CD8-positive, alpha-beta T cell (primary cell): ENCODE measurements at regions of chr9 and their contacts with region 1.

Region 1: DNA sequence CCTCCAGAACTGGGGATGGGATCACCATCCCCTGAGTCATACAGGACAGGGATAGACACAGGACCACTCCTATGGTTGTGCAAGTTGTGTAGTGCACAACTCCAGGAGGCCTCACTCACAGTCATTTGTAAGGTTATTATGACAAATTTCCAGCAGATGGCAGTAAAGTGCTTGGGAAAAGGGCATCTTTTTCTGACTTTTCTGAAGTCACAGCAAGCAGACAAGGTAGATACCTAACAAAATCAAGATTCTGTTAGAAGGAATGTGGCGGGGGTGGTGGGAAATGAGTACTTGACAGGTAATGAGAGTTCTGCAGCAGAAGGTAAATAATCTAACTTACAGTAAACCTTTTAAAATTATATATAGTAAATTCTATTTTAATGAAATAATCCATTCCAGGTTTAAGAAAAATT is 16.7 kb upstream of the KIF27 start:
- DNase-seq: peak in 6 of 9 experiments; percentile 4 to 78 (median 40)
- ATAC-seq: peak; percentile 77
- H3K4me3 ChIP-seq: no peak overlapping the region
- H3K4me3 Mint-ChIP-seq: no peak overlapping the region
- H3K27ac ChIP-seq: no peak overlapping the region
- H3K27ac Mint-ChIP-seq: no peak overlapping the region
- H3K4me1 ChIP-seq: no peaks in the 10 kb centered on the region
- H3K4me1 Mint-ChIP-seq: peaks cover 2% of the 10 kb centered on the region
- H3K27me3 ChIP-seq: no peaks in the 10 kb centered on the region
- H3K27me3 Mint-ChIP-seq: no peaks in the 10 kb centered on the region
- CTCF ChIP-seq: peak; percentile 80

Region 2: DNA sequence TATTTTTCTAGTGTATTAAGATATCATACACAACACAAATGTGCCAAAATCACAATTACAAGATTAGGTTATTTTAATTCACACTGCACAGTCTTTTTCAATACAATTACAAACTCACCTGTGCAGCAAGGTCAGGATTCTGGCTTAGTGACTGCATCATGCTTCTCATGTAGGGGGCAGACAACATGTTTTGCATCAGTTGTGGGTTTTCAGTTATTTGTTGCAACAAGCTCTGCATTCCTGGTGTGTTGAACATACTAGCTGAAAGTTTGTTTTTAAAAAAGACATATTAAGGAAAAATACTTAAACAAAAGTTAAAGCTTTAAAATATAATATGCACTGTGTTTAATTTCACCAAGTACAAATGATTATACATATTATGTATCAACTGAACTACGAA is 268.9 kb before region 1 on chr9:
- CTCF ChIA-PET with region 1: no interaction called
- POLR2A ChIA-PET with region 1: no interaction called
- intact Hi-C with region 1: no loop called
- DNase-seq: no peak
- ATAC-seq: no peak
- H3K4me3 ChIP-seq: no peak overlapping the region
- H3K4me3 Mint-ChIP-seq: no peak overlapping the region
- H3K27ac ChIP-seq: no peak overlapping the region
- H3K27ac Mint-ChIP-seq: no peak overlapping the region
- H3K4me1 ChIP-seq: peaks cover 3% of the 10 kb centered on the region
- H3K4me1 Mint-ChIP-seq: peaks cover 34% of the 10 kb centered on the region
- H3K27me3 ChIP-seq: no peaks in the 10 kb centered on the region
- H3K27me3 Mint-ChIP-seq: no peaks in the 10 kb centered on the region
- CTCF ChIP-seq: no peak

Region 3: DNA sequence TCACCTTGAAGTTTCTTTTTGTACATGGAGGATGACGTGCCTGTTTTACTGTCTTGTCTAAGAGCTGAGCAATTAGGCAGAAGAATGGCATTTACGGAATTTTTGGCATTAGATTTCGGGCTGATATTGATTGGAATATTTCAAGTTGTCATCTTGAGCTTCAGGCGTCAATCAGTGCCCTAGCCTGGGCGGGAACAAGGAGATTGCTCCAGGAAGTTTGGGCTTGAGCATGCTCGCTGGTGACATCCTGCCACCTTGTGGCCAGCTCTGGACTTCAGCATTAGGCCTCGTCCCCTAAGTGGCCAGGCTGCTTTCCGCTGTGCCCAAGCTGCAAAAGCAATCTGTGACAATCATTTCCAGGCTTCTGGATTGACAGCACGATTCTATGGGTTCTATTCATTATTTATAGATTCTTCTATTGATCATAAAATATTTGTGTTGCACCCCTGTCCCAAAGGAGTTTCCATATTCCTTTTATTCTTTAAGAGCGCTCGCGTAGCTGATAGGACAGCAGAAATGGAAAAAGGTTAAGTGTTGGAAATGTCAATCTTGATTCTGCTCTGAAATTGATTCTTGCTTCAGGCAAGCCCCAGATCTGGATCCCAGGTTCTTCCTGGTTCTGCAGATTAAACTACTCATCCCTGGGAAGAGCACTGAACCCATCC is 323.3 kb after region 1 on chr9:
- CTCF ChIA-PET with region 1: interaction called, 19 read pairs
- POLR2A ChIA-PET with region 1: no interaction called
- intact Hi-C with region 1: loop called in 1 of 2 experiments (anchors 1 kb)
- DNase-seq: peak in 8 of 9 experiments; percentile 17 to 63 (median 48)
- ATAC-seq: no peak
- H3K4me3 ChIP-seq: no peak overlapping the region
- H3K4me3 Mint-ChIP-seq: peak overlapping the region; percentile 43
- H3K27ac ChIP-seq: no peak overlapping the region
- H3K27ac Mint-ChIP-seq: no peak overlapping the region
- H3K4me1 ChIP-seq: no peaks in the 10 kb centered on the region
- H3K4me1 Mint-ChIP-seq: peaks cover 6% of the 10 kb centered on the region
- H3K27me3 ChIP-seq: no peaks in the 10 kb centered on the region
- H3K27me3 Mint-ChIP-seq: peaks cover 3% of the 10 kb centered on the region
- CTCF ChIP-seq: peak; percentile 57

Region 4: DNA sequence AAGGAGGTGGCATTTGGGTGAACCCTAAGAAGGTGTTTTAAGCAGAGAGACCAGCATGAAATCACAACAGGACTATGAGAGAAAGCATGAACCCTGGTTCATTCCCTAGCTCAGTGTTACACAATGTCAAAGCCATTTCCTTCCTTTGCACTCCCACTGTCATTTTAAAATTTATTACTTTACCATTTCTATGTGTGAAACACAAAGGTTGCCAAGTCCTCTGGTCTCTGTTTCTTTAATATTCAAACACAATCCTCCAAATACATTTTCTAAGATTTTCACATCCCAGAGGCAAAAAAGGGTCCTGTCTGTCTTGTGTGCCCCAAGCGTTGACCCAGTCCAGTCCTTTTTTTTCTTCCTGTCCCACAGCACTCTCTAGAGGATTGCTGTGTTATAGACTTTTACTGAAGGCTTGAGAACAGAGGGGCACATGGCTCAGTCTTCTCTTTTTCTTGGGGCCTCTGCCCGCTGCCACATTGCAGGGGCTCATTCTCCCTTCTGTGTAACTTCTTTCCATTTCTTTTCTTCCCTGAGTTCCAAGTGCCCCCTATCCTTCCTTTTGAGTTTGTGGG is 481.2 kb after region 1 on chr9:
- CTCF ChIA-PET with region 1: no interaction called
- POLR2A ChIA-PET with region 1: no interaction called
- intact Hi-C with region 1: no loop called
- DNase-seq: no peak
- ATAC-seq: no peak
- H3K4me3 ChIP-seq: no peak overlapping the region
- H3K4me3 Mint-ChIP-seq: no peak overlapping the region
- H3K27ac ChIP-seq: no peak overlapping the region
- H3K27ac Mint-ChIP-seq: no peak overlapping the region
- H3K4me1 ChIP-seq: no peaks in the 10 kb centered on the region
- H3K4me1 Mint-ChIP-seq: no peaks in the 10 kb centered on the region
- H3K27me3 ChIP-seq: no peaks in the 10 kb centered on the region
- H3K27me3 Mint-ChIP-seq: no peaks in the 10 kb centered on the region
- CTCF ChIP-seq: no peak